ENCODE measurements at regions of chr13 and their contacts with region 1.

Region 1: GRCh38 chr13:31965361-31966066 is 66.1 kb upstream of the FRY start:
- DNase-seq: peak in 1 of 2 experiments; percentile 52
- H3K4me3 ChIP-seq: no peak overlapping the region
- H3K27ac ChIP-seq: no peak overlapping the region
- H3K4me1 ChIP-seq: 0 out of 2 replicates have a peak, but pooled peaks cover 5% of the 10 kb centered on the region
- H3K27me3 ChIP-seq: no peaks in the 10 kb centered on the region
- CTCF ChIP-seq: no peak

Region 2: DNA sequence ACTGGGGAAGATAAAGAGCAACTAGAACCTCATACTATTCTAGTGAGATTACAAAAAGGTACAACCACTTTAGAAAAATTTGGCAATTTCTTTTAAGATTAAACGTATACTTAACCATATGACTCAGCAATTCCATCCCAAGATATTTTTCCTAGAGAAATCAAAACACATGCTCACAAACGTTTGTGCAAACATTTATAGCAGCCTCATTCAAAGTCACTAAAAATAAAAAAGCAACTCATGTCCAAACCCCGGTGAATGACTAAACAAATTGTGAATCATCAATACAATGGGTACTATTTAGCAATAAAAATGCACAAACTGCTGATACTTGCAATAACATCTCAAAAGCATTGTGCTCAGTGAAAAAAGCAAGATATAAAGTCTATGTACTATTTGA is 187.5 kb after region 1 on chr13:
- CTCF ChIA-PET with region 1: no interaction called
- POLR2A ChIA-PET with region 1: interaction called, 20 read pairs
- intact Hi-C with region 1: no loop called
- DNase-seq: no peak
- H3K4me3 ChIP-seq: no peak overlapping the region
- H3K27ac ChIP-seq: no peak overlapping the region; the same call in 1 of the 2 replicates
- H3K4me1 ChIP-seq: peaks cover 7% of the 10 kb centered on the region; the same call in 1 of the 2 replicates
- H3K27me3 ChIP-seq: no peaks in the 10 kb centered on the region
- CTCF ChIP-seq: no peak

Region 3: DNA sequence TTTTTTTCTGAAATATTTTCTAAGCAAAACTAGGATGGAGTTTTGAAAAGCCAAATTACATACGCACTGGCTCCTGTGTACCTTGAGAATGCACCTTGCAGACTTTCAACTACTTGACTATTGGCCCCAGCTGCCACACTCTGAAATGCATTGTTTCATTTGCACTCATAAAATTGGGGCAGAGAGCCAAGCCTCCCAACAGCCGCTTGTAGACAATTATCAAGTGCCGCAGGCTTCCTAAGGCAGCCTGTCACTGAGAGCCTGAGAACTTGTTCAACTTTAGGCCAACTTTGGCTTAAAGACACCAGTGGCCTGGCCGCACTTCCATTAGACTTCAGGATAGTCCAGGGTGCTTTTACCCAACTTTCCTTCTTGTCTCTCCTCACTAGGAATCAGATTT is 1435.7 kb after region 1 on chr13:
- CTCF ChIA-PET with region 1: interaction called, 19 read pairs
- POLR2A ChIA-PET with region 1: no interaction called
- intact Hi-C with region 1: no loop called
- DNase-seq: no peak
- H3K4me3 ChIP-seq: no peak overlapping the region
- H3K27ac ChIP-seq: no peak overlapping the region
- H3K4me1 ChIP-seq: no peaks in the 10 kb centered on the region
- H3K27me3 ChIP-seq: no peaks in the 10 kb centered on the region
- CTCF ChIP-seq: no peak

Measured in PC-9 (cell line).